ENCODE measurements at regions of chr11 and their contacts with region 1.

Region 1: DNA sequence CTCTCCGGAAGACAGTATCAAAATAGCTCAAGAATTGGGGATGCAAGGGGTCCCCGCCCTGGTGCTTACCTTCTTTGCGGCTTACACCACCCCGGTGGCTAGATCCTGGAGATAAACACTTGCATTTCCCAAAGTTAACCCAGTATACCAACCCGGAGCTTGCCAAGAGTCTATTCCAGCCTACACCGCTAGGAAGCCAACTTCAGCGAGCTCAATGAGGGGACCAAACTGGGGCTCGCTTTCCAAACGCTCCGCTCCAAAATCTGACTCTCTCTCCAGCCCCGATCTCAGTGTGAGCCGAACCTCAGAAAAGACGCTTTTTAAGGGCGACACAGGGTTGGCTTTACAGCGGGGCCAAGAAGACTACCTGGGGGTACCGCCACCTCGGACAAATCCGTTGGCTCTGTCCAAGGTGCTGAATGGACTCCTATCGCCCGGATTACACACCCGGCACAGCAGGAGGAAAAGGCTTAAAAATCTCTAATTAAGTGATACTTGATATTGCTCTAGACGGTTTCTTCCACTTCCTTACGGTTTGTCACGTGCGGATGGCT is 20.1 kb upstream of the BDNF start:
- DNase-seq: peak; percentile 68
- ATAC-seq: no peak
- H3K4me3 ChIP-seq: peak overlapping the region; percentile 0; the same call in 1 of the 2 replicates
- H3K27ac ChIP-seq: no peak overlapping the region
- H3K4me1 ChIP-seq: peaks cover 6% of the 10 kb centered on the region
- H3K27me3 ChIP-seq: no peaks in the 10 kb centered on the region
- CTCF ChIP-seq: 0 out of 2 replicates have a peak, but pooled peaks have one; percentile 18
- POLR2A ChIP-seq: no peak
- RAD21 ChIP-seq: no peak

Region 2: DNA sequence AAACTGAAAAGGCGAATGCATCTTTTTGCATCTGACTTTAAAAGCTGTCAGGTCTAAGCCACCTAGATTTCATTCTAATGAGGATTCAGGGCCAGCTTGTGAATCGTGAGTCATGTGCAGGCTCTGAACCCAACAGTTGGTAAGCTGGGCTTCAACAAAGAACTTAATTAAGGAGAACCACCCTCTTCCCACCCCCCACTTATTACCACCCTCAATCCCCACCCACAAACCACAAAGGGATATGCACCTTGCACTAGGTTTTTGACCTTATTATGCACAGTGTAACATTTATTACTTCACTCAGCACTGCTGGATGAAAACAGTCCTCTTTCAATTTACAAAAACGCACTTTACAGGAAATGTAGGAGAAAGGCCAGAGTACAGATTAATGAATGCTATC is 119.7 kb before region 1 on chr11:
- CTCF ChIA-PET with region 1: no interaction called
- POLR2A ChIA-PET with region 1: no interaction called
- dilution Hi-C with region 1: no loop called
- in situ Hi-C with region 1: no loop called
- intact Hi-C with region 1: no loop called
- DNase-seq: no peak
- ATAC-seq: no peak
- H3K4me3 ChIP-seq: no peak overlapping the region
- H3K27ac ChIP-seq: no peak overlapping the region
- H3K4me1 ChIP-seq: no peaks in the 10 kb centered on the region
- H3K27me3 ChIP-seq: no peaks in the 10 kb centered on the region; the same call in 1 of the 2 replicates
- CTCF ChIP-seq: no peak
- POLR2A ChIP-seq: no peak
- RAD21 ChIP-seq: no peak

Region 3: GRCh38 chr11:27861706-27862430 is 141.5 kb after region 1 on chr11:
- CTCF ChIA-PET with region 1: no interaction called
- POLR2A ChIA-PET with region 1: no interaction called
- dilution Hi-C with region 1: no loop called
- in situ Hi-C with region 1: no loop called
- intact Hi-C with region 1: loop called (anchors 10 kb)
- DNase-seq: peak; percentile 95
- ATAC-seq: peak; percentile 97
- H3K4me3 ChIP-seq: no peak overlapping the region
- H3K27ac ChIP-seq: no peak overlapping the region
- H3K4me1 ChIP-seq: peaks cover 2% of the 10 kb centered on the region; the same call in 1 of the 2 replicates
- H3K27me3 ChIP-seq: no peaks in the 10 kb centered on the region
- CTCF ChIP-seq: no peak
- POLR2A ChIP-seq: no peak
- RAD21 ChIP-seq: 0 out of 2 replicates have a peak, but pooled peaks have one; percentile 22

Region 4: GRCh38 chr11:27934830-27935145 is 214.4 kb after region 1 on chr11:
- CTCF ChIA-PET with region 1: no interaction called
- POLR2A ChIA-PET with region 1: no interaction called
- dilution Hi-C with region 1: no loop called
- in situ Hi-C with region 1: loop called (anchors 10 kb)
- intact Hi-C with region 1: loop called (anchors 1 kb)
- DNase-seq: peak; percentile 98
- ATAC-seq: peak; percentile 69
- H3K4me3 ChIP-seq: peak overlapping the region; percentile 11; the same call in 1 of the 2 replicates
- H3K27ac ChIP-seq: peak overlapping the region; percentile 90
- H3K4me1 ChIP-seq: peaks cover 6% of the 10 kb centered on the region
- H3K27me3 ChIP-seq: no peaks in the 10 kb centered on the region
- CTCF ChIP-seq: no peak
- POLR2A ChIP-seq: no peak; the same call in none of the 2 replicates
- RAD21 ChIP-seq: peak; percentile 29; the same call in 1 of the 2 replicates

Region 5: DNA sequence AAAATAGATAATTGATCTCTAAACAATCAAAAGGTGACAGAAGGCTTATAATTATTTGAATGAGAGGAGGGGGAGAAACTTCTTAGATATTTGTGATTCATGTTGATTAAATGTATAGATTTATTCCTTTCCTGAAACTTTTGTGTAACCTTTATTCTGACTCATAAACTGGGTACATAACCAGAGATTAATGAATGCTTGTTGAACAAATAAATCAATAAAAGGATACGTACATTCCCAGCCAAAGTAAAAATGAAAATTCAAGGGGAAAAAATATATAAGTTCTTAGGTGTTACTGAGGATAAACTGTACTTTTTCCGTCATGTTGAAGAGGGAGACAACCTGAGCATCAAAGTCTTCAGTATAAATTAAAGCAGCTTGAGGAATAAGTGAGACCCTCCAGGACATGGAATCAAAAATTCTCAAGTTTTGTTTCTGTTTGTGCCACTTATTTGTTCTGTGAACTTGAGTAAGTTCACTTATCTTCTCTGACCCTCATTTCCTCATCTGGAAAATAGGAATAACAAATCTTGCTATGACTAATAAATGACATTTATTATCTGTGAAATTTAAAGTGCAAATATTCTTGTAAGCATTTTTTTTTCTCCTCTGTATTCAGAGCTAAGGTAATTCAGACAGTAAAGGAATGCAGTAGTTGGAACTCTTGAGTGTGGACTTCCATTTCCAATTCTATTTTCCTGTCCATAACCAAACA is 583.3 kb after region 1 on chr11:
- CTCF ChIA-PET with region 1: interaction called, 3 read pairs
- POLR2A ChIA-PET with region 1: no interaction called
- dilution Hi-C with region 1: no loop called
- in situ Hi-C with region 1: no loop called
- intact Hi-C with region 1: loop called (anchors 10 kb)
- DNase-seq: peak; percentile 22
- ATAC-seq: no peak
- H3K4me3 ChIP-seq: no peak overlapping the region
- H3K27ac ChIP-seq: no peak overlapping the region
- H3K4me1 ChIP-seq: no peaks in the 10 kb centered on the region
- H3K27me3 ChIP-seq: no peaks in the 10 kb centered on the region
- CTCF ChIP-seq: no peak
- POLR2A ChIP-seq: no peak
- RAD21 ChIP-seq: no peak

Region 6: DNA sequence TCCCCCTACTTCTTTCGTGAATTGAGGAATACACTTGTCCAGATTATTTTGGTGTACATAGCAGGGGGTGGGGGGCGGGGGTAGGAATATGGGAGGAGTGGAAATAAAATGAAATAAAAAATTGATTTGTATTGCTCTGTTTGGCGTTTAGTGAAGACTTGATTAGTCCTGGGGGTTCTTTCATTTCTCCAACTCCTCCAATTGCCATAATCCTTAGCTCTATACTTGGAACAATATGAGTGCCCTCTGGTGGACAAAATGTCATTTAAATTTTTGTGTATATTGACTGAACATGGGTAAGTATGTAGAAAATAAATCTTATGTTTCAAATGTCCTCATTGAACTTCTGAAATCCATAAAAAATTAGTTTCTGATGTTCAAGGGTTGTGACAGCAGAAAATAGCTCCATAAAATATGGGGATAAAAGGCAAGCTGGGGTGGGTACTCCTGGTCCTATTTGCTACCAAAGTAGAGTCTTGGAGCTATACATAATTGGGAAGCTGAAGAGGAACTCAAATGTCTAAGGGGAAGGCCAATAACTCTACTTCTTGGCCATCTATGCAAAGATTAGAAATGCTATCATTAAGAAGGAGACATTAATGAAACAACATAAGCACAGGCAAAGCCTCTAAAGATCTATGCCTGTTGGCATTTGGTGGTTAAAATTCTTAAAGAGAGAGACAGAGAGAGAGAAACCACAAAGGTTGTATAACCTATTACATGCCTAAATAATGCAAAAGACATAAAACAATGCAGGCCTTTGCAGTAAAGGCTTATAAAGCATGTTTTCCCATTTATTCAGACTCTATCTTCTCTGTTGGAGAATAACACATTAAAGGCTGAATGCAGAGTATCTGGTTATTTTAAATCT is 809.4 kb after region 1 on chr11:
- CTCF ChIA-PET with region 1: interaction called, 5 read pairs
- POLR2A ChIA-PET with region 1: no interaction called
- dilution Hi-C with region 1: no loop called
- in situ Hi-C with region 1: loop called (anchors 25 kb)
- intact Hi-C with region 1: loop called (anchors 5 kb)
- DNase-seq: peak; percentile 82
- ATAC-seq: peak; percentile 64
- H3K4me3 ChIP-seq: no peak overlapping the region
- H3K27ac ChIP-seq: peak overlapping the region; percentile 19; the same call in 1 of the 2 replicates
- H3K4me1 ChIP-seq: peaks cover 3% of the 10 kb centered on the region; the same call in 1 of the 2 replicates
- H3K27me3 ChIP-seq: no peaks in the 10 kb centered on the region
- CTCF ChIP-seq: peak; percentile 57
- POLR2A ChIP-seq: no peak
- RAD21 ChIP-seq: peak; percentile 59

Measured in IMR-90 (cell line).